B cell (primary cell): ENCODE measurements at regions of chr10 and their contacts with region 1.

Region 1: GRCh38 chr10:133394064-133394663 is at the start of gene MTG1:
- DNase-seq: peak; percentile 95
- ATAC-seq: peak; percentile 66
- H3K4me3 ChIP-seq: peak within 1 kb of the TSS; percentile 64 to 84 (median 74)
- H3K4me3 Mint-ChIP-seq: peak within 1 kb of the TSS; percentile 92
- H3K27ac ChIP-seq: peak within 1 kb of the TSS; percentile 51 to 81
- H3K27ac Mint-ChIP-seq: peak within 1 kb of the TSS; percentile 89
- H3K4me1 ChIP-seq: peaks cover 44 to 56% of the 10 kb centered on the region in 2 donors
- H3K4me1 Mint-ChIP-seq: peaks cover 59% of the 10 kb centered on the region
- H3K27me3 ChIP-seq: no peaks in the 10 kb centered on the region
- H3K27me3 Mint-ChIP-seq: no peaks in the 10 kb centered on the region
- CTCF ChIP-seq: no peak
- total RNA-seq, gene MTG1: 85.1 and 90.0 TPM in 2 replicates

Region 2: GRCh38 chr10:133278577-133279265 is 115.4 kb before region 1 on chr10:
- CTCF ChIA-PET with region 1: no interaction called
- POLR2A ChIA-PET with region 1: no interaction called
- intact Hi-C with region 1: loop called (anchors 5 kb)
- DNase-seq: peak; percentile 68
- ATAC-seq: peak; percentile 24
- H3K4me3 ChIP-seq: peak overlapping the region in 1 of 5 experiments; percentile 33
- H3K4me3 Mint-ChIP-seq: peak overlapping the region; percentile 90
- H3K27ac ChIP-seq: peak overlapping the region; percentile 57 to 97
- H3K27ac Mint-ChIP-seq: peak overlapping the region; percentile 95
- H3K4me1 ChIP-seq: peaks cover 45 to 63% of the 10 kb centered on the region in 2 donors
- H3K4me1 Mint-ChIP-seq: peaks cover 43% of the 10 kb centered on the region
- H3K27me3 ChIP-seq: no peaks in the 10 kb centered on the region
- H3K27me3 Mint-ChIP-seq: no peaks in the 10 kb centered on the region
- CTCF ChIP-seq: no peak

Region 3: GRCh38 chr10:133329491-133330202 is 64.5 kb before region 1 on chr10:
- CTCF ChIA-PET with region 1: interaction called, 13 read pairs
- POLR2A ChIA-PET with region 1: no interaction called
- intact Hi-C with region 1: loop called (anchors 1 kb)
- DNase-seq: peak; percentile 91
- ATAC-seq: peak; percentile 86
- H3K4me3 ChIP-seq: peak overlapping the region in 3 of 5 experiments; percentile 15 to 47 (median 38)
- H3K4me3 Mint-ChIP-seq: peak overlapping the region; percentile 44
- H3K27ac ChIP-seq: no peak overlapping the region
- H3K27ac Mint-ChIP-seq: no peak overlapping the region
- H3K4me1 ChIP-seq: peaks cover 28 to 42% of the 10 kb centered on the region in 2 donors
- H3K4me1 Mint-ChIP-seq: peaks cover 17% of the 10 kb centered on the region
- H3K27me3 ChIP-seq: peaks cover 0 to 55% (median 38%) of the 10 kb centered on the region in 4 experiments
- H3K27me3 Mint-ChIP-seq: peaks cover 43% of the 10 kb centered on the region
- CTCF ChIP-seq: peak; percentile 97

Region 4: DNA sequence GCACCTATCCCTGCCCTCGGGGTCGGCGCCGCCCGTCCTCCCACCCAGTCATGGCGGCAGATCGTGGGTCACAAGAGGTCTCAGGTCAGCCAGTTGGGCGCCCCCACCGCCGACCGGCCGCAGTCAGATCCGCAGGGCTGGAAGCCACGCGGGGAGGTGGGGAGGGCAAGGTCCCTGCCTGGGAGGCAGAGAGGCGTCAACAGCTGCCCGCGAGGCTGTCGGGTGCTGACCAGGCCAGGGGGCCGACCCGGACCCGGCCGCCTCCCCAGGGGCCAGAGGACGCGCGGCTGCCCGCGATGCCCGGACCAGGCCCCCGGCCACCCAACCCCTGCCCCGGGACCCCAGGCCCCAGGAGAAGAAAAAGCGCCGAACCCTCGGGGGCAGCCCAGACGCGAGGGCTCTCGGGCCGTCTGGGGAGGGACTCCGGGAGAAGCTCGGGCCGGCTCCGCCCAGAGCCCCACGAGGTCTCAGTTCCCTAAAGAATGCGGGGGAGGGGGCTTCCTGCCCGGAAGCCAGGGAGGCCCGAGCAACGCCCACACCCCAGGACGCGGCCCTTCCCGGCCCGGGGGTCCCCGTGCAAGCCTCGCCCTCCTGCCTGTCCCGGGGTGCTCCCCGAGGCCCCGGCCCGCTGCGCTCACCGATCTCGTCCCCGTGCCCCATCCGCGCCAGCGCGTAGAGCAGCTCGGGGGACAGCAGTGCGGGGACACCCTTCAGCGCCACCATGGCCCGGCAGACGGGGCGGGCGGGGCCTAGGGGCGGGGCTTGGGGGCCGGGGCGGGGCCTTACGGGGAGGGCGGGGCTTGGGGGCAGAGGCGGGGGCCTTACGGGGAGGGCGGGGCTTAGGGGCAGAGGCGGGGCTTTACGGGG is 36.6 kb before region 1 on chr10 and contains the start of gene FUOM:
- CTCF ChIA-PET with region 1: interaction called, 5 read pairs
- POLR2A ChIA-PET with region 1: interaction called, 11 read pairs
- intact Hi-C with region 1: loop called (anchors 1 kb)
- DNase-seq: peak; percentile 89
- ATAC-seq: peak; percentile 85
- H3K4me3 ChIP-seq: peak within 1 kb of the TSS in 4 of 5 experiments; percentile 57 to 87 (median 68)
- H3K4me3 Mint-ChIP-seq: peak within 1 kb of the TSS; percentile 80
- H3K27ac ChIP-seq: peak within 1 kb of the TSS in 1 of 2 donors; percentile 71
- H3K27ac Mint-ChIP-seq: peak within 1 kb of the TSS; percentile 26
- H3K4me1 ChIP-seq: peaks cover 20 to 39% of the 10 kb centered on the region in 2 donors
- H3K4me1 Mint-ChIP-seq: peaks cover 32% of the 10 kb centered on the region
- H3K27me3 ChIP-seq: no peaks in the 10 kb centered on the region
- H3K27me3 Mint-ChIP-seq: no peaks in the 10 kb centered on the region
- CTCF ChIP-seq: no peak
- total RNA-seq, gene FUOM: 20.7 and 23.8 TPM in 2 replicates

Region 5: GRCh38 chr10:133378251-133379096 is 15.7 kb before region 1 on chr10:
- CTCF ChIA-PET with region 1: interaction called, 7 read pairs
- POLR2A ChIA-PET with region 1: interaction called, 12 read pairs
- intact Hi-C with region 1: loop called (anchors 1 kb)
- DNase-seq: peak; percentile 85
- ATAC-seq: peak; percentile 56
- H3K4me3 ChIP-seq: peak overlapping the region; percentile 63 to 88 (median 78)
- H3K4me3 Mint-ChIP-seq: peak overlapping the region; percentile 91
- H3K27ac ChIP-seq: no peak overlapping the region
- H3K27ac Mint-ChIP-seq: peak overlapping the region; percentile 91
- H3K4me1 ChIP-seq: peaks cover 34 to 44% of the 10 kb centered on the region in 2 donors
- H3K4me1 Mint-ChIP-seq: peaks cover 42% of the 10 kb centered on the region
- H3K27me3 ChIP-seq: no peaks in the 10 kb centered on the region
- H3K27me3 Mint-ChIP-seq: no peaks in the 10 kb centered on the region
- CTCF ChIP-seq: no peak

Region 6: DNA sequence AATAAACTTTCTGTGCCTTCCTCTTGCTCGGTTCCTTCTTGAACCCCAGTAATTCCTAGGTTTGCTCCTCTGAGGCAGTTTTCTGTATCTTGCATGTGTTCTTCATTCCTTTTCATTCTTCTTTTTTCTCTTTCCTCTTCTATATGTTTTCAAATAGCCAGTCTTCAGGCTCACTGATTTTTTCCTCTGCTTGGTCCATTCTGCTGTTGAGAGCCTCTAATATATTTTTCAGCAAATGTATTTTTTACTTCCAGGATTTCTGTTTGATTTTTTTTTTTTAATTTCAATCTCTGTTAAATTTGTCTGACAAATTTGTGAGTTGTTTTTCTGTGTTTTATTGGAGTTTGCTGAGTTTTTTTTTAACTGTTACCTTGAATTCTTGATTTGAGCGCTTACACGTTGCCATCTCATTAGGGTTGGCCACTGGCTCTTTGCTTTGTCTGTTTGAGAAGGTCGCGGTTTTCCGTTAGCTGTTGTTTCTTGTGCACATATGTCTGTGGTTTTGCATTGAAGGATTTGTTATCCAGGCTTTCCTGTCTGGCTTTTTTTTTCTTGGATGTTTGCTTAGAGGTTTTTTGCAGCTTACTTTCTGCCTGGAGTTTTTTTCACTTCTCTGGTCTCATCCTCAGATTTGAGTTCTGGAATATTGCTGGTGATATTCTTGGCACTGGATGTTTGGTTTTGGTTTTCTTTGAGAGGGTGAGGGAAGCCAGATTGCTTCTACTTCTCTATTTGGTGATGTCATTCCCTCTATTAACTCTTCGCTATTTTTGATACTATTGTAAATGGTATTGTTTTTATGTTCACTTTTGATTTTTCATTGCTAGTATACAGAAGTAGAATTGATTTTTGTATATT is 17.6 kb after region 1 on chr10:
- CTCF ChIA-PET with region 1: no interaction called
- POLR2A ChIA-PET with region 1: no interaction called
- intact Hi-C with region 1: no loop called
- DNase-seq: no peak
- ATAC-seq: no peak
- H3K4me3 ChIP-seq: no peak overlapping the region
- H3K4me3 Mint-ChIP-seq: no peak overlapping the region
- H3K27ac ChIP-seq: no peak overlapping the region
- H3K27ac Mint-ChIP-seq: no peak overlapping the region
- H3K4me1 ChIP-seq: no peaks in the 10 kb centered on the region
- H3K4me1 Mint-ChIP-seq: peaks cover 20% of the 10 kb centered on the region
- H3K27me3 ChIP-seq: no peaks in the 10 kb centered on the region
- H3K27me3 Mint-ChIP-seq: no peaks in the 10 kb centered on the region
- CTCF ChIP-seq: no peak

Region 7: GRCh38 chr10:133509700-133510099 is 115.5 kb after region 1 on chr10:
- CTCF ChIA-PET with region 1: no interaction called
- POLR2A ChIA-PET with region 1: no interaction called
- intact Hi-C with region 1: no loop called
- DNase-seq: no peak
- ATAC-seq: no peak
- H3K4me3 ChIP-seq: no peak overlapping the region
- H3K4me3 Mint-ChIP-seq: no peak overlapping the region
- H3K27ac ChIP-seq: no peak overlapping the region
- H3K27ac Mint-ChIP-seq: no peak overlapping the region
- H3K4me1 ChIP-seq: no peaks in the 10 kb centered on the region
- H3K4me1 Mint-ChIP-seq: no peaks in the 10 kb centered on the region
- H3K27me3 ChIP-seq: peaks cover 0 to 8% (median 5%) of the 10 kb centered on the region in 4 experiments
- H3K27me3 Mint-ChIP-seq: peaks cover 47% of the 10 kb centered on the region
- CTCF ChIP-seq: no peak